Natural killer cell (primary cell): ENCODE measurements at regions of chr9 and their contacts with region 1.

Region 1: GRCh38 chr9:34603610-34604231 is 8.2 kb downstream of the RPP25L start:
- DNase-seq: peak; percentile 76 to 88
- ATAC-seq: peak; percentile 82 to 99 (median 95)
- H3K4me3 ChIP-seq: no peak overlapping the region
- H3K4me3 Mint-ChIP-seq: no peak overlapping the region
- H3K27ac ChIP-seq: no peak overlapping the region
- H3K27ac Mint-ChIP-seq: no peak overlapping the region
- H3K4me1 ChIP-seq: no peaks in the 10 kb centered on the region
- H3K4me1 Mint-ChIP-seq: no peaks in the 10 kb centered on the region
- H3K27me3 ChIP-seq: no peaks in the 10 kb centered on the region
- H3K27me3 Mint-ChIP-seq: peaks cover 0 to 6% of the 10 kb centered on the region in 2 donors
- CTCF ChIP-seq: peak; percentile 88

Region 2: GRCh38 chr9:33687779-33688178 is 915.9 kb before region 1 on chr9:
- intact Hi-C with region 1: no loop called
- DNase-seq: no peak
- ATAC-seq: peak in 1 of 3 donors; percentile 40
- H3K4me3 ChIP-seq: no peak overlapping the region
- H3K4me3 Mint-ChIP-seq: no peak overlapping the region
- H3K27ac ChIP-seq: no peak overlapping the region
- H3K27ac Mint-ChIP-seq: no peak overlapping the region
- H3K4me1 ChIP-seq: no peaks in the 10 kb centered on the region
- H3K4me1 Mint-ChIP-seq: peaks cover 0 to 6% of the 10 kb centered on the region in 2 donors
- H3K27me3 ChIP-seq: no peaks in the 10 kb centered on the region
- H3K27me3 Mint-ChIP-seq: peaks cover 27 to 35% of the 10 kb centered on the region in 2 donors
- CTCF ChIP-seq: no peak

Region 3: GRCh38 chr9:34403554-34404380 is 200.0 kb before region 1 on chr9:
- intact Hi-C with region 1: loop called (anchors 1 kb)
- DNase-seq: peak; percentile 41 to 73
- ATAC-seq: peak in 2 of 3 donors; percentile 62 to 70
- H3K4me3 ChIP-seq: no peak overlapping the region
- H3K4me3 Mint-ChIP-seq: no peak overlapping the region
- H3K27ac ChIP-seq: no peak overlapping the region
- H3K27ac Mint-ChIP-seq: no peak overlapping the region
- H3K4me1 ChIP-seq: no peaks in the 10 kb centered on the region
- H3K4me1 Mint-ChIP-seq: no peaks in the 10 kb centered on the region
- H3K27me3 ChIP-seq: no peaks in the 10 kb centered on the region
- H3K27me3 Mint-ChIP-seq: no peaks in the 10 kb centered on the region
- CTCF ChIP-seq: peak; percentile 96

Region 4: DNA sequence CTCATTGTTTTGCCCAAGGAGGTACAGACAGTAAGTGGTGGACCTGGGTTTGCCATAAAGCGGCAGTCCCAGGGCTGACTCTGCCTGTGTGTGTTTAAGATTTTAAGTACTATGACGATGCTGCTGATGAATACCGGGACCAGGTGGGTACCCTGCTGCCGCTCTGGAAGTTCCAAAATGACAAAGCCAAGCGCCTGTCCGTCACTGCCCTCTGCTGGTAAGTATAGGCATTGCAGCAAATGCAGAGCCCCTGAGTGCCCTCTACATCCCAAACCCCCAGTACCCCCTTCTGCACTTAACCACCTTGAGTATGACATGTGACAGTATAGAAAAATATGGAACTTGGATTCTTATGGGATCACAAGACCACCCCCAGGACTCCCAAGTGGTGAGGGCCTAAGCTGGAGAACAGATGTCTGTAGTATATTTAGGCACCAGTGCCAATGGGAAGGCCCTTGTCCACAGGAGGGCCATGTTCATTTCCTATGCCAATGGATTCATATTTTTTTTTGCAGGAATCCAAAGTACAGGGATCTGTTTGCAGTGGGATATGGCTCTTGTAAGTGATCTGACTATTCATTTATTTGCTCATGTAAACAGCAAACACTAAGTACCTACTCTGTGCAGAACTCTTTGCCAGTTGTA is 103.0 kb before region 1 on chr9:
- intact Hi-C with region 1: no loop called
- DNase-seq: peak; percentile 66 to 82
- ATAC-seq: peak; percentile 77 to 99 (median 93)
- H3K4me3 ChIP-seq: no peak overlapping the region
- H3K4me3 Mint-ChIP-seq: no peak overlapping the region
- H3K27ac ChIP-seq: no peak overlapping the region
- H3K27ac Mint-ChIP-seq: no peak overlapping the region
- H3K4me1 ChIP-seq: no peaks in the 10 kb centered on the region
- H3K4me1 Mint-ChIP-seq: no peaks in the 10 kb centered on the region
- H3K27me3 ChIP-seq: no peaks in the 10 kb centered on the region
- H3K27me3 Mint-ChIP-seq: peaks cover 25 to 32% of the 10 kb centered on the region in 2 donors
- CTCF ChIP-seq: peak; percentile 93